ENCODE measurements at regions of chr19 and their contacts with region 1.

Region 1: GRCh38 chr19:3544742-3545668 is 6.0 kb downstream of the TEKTIP1 start:
- DNase-seq: peak; percentile 84
- ATAC-seq: peak; percentile 61
- H3K4me3 Mint-ChIP-seq: no peak overlapping the region
- H3K27ac Mint-ChIP-seq: peak overlapping the region; percentile 46
- H3K4me1 Mint-ChIP-seq: peaks cover 5% of the 10 kb centered on the region
- H3K27me3 Mint-ChIP-seq: no peaks in the 10 kb centered on the region

Region 2: GRCh38 chr19:3524075-3524842 is 20.7 kb before region 1 on chr19:
- CTCF ChIA-PET with region 1: no interaction called
- DNase-seq: no peak
- ATAC-seq: no peak
- H3K4me3 Mint-ChIP-seq: no peak overlapping the region
- H3K27ac Mint-ChIP-seq: no peak overlapping the region
- H3K4me1 Mint-ChIP-seq: peaks cover 4% of the 10 kb centered on the region
- H3K27me3 Mint-ChIP-seq: no peaks in the 10 kb centered on the region

Region 3: DNA sequence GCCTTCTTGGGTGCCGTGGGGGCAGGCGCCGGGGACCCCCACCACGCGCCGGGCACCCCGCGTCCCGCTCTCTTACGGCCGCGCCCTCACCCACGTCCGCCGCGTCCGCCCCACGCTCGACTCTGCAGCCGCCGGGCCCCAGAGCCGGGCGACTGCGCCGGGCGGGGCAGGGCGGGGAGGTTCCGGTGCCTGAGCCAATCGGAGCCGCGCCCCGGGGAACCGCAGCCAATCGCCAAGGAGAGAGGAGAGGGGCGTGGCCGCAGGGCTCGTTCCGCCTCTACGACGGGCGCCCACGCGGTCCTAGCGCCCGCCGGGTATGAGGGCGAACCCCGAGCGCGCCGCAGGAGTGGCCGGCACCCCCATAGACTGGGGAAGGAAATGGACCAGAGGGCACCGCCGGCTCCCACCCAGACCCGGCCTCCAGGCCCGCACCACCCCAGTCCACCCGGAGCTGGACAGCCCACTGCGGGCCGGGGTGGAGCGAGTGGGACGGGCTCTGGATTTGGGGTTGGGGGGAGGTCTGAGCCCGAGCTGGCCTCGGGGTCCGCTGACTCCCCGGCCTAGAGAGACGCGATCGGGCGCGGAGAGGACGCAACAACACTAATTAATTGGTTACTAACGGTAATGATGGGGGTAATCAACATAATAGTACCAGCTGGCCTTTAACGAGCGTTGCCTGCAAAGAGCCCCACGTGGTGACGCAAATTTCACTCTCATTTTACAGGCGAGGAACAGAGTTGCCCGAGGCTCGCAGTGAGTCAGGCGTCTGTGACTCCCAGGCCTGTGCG is 12.7 kb after region 1 on chr19 and contains the start of gene MFSD12:
- CTCF ChIA-PET with region 1: interaction called, 77 read pairs
- DNase-seq: peak; percentile 95
- ATAC-seq: peak; percentile 94
- H3K4me3 Mint-ChIP-seq: peak within 1 kb of the TSS; percentile 92
- H3K27ac Mint-ChIP-seq: peak within 1 kb of the TSS; percentile 84
- H3K4me1 Mint-ChIP-seq: peaks cover 38% of the 10 kb centered on the region
- H3K27me3 Mint-ChIP-seq: no peaks in the 10 kb centered on the region
- total RNA-seq, gene MFSD12: 54.8 to 71.4 TPM

Region 4: DNA sequence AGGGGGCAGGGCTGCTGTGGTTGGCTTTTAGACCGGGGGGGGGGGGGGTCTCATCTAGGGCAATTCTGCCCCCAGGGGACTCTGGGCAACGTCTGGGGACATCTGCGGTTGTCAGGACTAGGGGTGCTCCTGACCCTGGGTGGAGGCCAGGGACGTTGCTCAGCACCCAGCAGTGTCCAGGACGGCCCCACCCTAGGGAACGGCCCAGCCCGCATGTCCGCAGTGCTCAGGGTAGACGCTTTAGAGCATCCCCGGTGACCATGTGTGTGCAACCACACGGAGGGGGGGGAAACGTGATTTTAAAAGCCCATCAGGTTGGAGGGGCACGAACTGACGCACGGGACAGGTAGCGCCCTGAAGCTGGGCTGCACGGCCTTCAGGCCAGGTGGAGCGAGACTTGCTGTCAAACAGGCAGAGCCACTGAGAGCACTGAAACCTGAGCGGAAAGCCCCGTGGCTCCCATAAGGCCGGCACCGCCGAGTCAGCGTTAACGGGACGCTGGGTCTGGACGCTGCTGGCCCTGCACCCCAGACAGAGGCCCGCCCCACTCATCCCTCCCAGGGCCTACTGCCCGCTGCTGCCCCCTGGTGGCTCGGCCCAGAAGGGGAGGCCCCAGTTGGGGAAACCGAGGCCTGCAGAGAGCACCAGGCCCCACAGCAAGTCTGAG is 73.3 kb after region 1 on chr19:
- CTCF ChIA-PET with region 1: interaction called, 13 read pairs
- DNase-seq: peak; percentile 58
- ATAC-seq: peak; percentile 68
- H3K4me3 Mint-ChIP-seq: no peak overlapping the region
- H3K27ac Mint-ChIP-seq: no peak overlapping the region
- H3K4me1 Mint-ChIP-seq: no peaks in the 10 kb centered on the region
- H3K27me3 Mint-ChIP-seq: no peaks in the 10 kb centered on the region

Region 5: GRCh38 chr19:3748965-3749364 is 204.0 kb after region 1 on chr19:
- CTCF ChIA-PET with region 1: no interaction called
- DNase-seq: no peak
- ATAC-seq: no peak
- H3K4me3 Mint-ChIP-seq: no peak overlapping the region
- H3K27ac Mint-ChIP-seq: no peak overlapping the region
- H3K4me1 Mint-ChIP-seq: no peaks in the 10 kb centered on the region
- H3K27me3 Mint-ChIP-seq: no peaks in the 10 kb centered on the region

Measured in activated CD8-positive, alpha-beta memory T cell treated with anti-CD3 and anti-CD28 coated beads, Interleukin-2, amount 10 ng/mL, durations not matched to agents 7 days and 5 days (primary cell).